ENCODE measurements at regions of chr1 and their contacts with region 1.

Region 1: DNA sequence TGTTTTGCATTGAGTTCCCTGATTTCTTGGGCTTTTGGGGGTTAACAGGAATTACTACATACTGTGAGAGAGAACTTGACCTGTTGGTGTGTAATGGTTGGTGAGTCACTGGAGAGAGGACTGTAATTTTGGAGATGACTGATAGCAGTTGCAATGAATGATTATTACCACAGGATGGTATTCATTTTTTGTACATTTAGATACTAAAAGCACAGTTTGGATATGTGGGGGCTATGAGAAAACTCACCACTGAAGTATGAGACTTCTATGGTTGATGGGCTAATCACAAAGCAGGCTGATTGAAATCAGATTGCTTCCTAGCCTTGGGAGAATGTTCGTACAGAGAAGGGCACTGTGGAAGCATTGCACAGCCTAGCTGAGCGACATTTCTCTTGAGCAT is 1571.3 kb upstream of the PRMT6 start:
- DNase-seq: no peak
- H3K4me3 Mint-ChIP-seq: no peak overlapping the region
- H3K27ac Mint-ChIP-seq: no peak overlapping the region
- H3K4me1 Mint-ChIP-seq: no peaks in the 10 kb centered on the region
- H3K27me3 Mint-ChIP-seq: no peaks in the 10 kb centered on the region

Region 2: DNA sequence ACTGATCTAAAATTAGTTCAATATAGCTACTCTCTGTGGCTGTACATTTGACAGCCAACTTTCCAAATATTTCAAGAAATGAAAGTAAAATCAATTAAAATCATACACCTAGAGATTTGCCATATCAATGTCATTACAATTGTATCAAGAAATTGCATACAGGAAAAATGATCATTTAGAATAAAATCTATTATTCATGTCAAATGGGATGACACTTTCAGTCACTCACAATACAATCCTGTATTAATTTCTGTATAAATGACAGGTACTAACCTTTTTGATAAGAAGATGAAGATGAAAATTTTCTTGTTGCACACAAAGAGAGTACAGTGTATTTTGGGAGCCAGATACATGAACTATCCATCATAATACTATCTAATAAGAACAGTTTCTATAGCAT is 17.7 kb before region 1 on chr1:
- CTCF ChIA-PET with region 1: no interaction called
- intact Hi-C with region 1: loop called (anchors 1 kb)
- DNase-seq: no peak
- H3K4me3 Mint-ChIP-seq: no peak overlapping the region
- H3K27ac Mint-ChIP-seq: no peak overlapping the region
- H3K4me1 Mint-ChIP-seq: no peaks in the 10 kb centered on the region
- H3K27me3 Mint-ChIP-seq: no peaks in the 10 kb centered on the region

Region 3: GRCh38 chr1:105533996-105534395 is 48.8 kb after region 1 on chr1:
- CTCF ChIA-PET with region 1: no interaction called
- intact Hi-C with region 1: no loop called
- DNase-seq: no peak
- H3K4me3 Mint-ChIP-seq: no peak overlapping the region
- H3K27ac Mint-ChIP-seq: no peak overlapping the region
- H3K4me1 Mint-ChIP-seq: no peaks in the 10 kb centered on the region
- H3K27me3 Mint-ChIP-seq: no peaks in the 10 kb centered on the region

Region 4: GRCh38 chr1:105608713-105609112 is 123.5 kb after region 1 on chr1:
- CTCF ChIA-PET with region 1: no interaction called
- intact Hi-C with region 1: no loop called
- DNase-seq: no peak
- H3K4me3 Mint-ChIP-seq: no peak overlapping the region
- H3K27ac Mint-ChIP-seq: no peak overlapping the region
- H3K4me1 Mint-ChIP-seq: no peaks in the 10 kb centered on the region
- H3K27me3 Mint-ChIP-seq: no peaks in the 10 kb centered on the region